ENCODE measurements at regions of chr5 and their contacts with region 1.

Region 1: DNA sequence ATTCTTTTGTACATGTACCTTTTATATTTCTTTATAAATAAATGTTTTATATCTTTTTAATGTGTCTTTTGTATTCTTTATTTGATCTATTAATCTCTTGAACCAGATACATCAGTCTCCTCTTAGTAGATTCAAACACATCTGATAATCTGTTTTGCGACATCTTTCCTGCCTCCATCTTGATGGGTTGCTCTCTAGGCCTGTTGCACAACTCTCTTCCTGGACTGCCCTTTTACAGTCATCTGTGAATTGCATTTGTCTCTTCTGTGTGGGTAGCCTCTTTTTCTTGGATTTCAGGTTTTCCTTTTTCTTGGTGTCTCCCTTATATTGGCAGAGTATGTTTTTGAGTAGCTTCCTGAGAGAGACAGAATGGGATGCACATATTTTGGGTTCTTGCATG is 6.2 kb downstream of the ZFYVE16 start:
- DNase-seq: no peak
- ATAC-seq: no peak
- H3K4me3 ChIP-seq: no peak overlapping the region
- H3K4me3 Mint-ChIP-seq: no peak overlapping the region
- H3K27ac ChIP-seq: no peak overlapping the region
- H3K27ac Mint-ChIP-seq: no peak overlapping the region
- H3K4me1 ChIP-seq: peaks cover 0 to under 1% of the 10 kb centered on the region in 2 experiments
- H3K4me1 Mint-ChIP-seq: peaks cover 16 to 39% (median 23%) of the 10 kb centered on the region in 3 donors
- H3K27me3 ChIP-seq: no peaks in the 10 kb centered on the region
- H3K27me3 Mint-ChIP-seq: no peaks in the 10 kb centered on the region

Region 2: GRCh38 chr5:80399526-80400239 is 14.4 kb before region 1 on chr5:
- CTCF ChIA-PET with region 1: no interaction called
- POLR2A ChIA-PET with region 1: interaction called in 1 of 2 experiments, 12 read pairs
- DNase-seq: peak in 2 of 35 experiments; percentile 6 to 8
- ATAC-seq: no peak
- H3K4me3 ChIP-seq: no peak overlapping the region
- H3K4me3 Mint-ChIP-seq: no peak overlapping the region
- H3K27ac ChIP-seq: no peak overlapping the region
- H3K27ac Mint-ChIP-seq: no peak overlapping the region
- H3K4me1 ChIP-seq: no peaks in the 10 kb centered on the region
- H3K4me1 Mint-ChIP-seq: no peaks in the 10 kb centered on the region
- H3K27me3 ChIP-seq: peaks cover 0 to 14% of the 10 kb centered on the region in 2 experiments
- H3K27me3 Mint-ChIP-seq: peaks cover 9 to 11% of the 10 kb centered on the region in 2 donors

Region 3: GRCh38 chr5:80466669-80467485 is 52.8 kb after region 1 on chr5:
- CTCF ChIA-PET with region 1: no interaction called
- POLR2A ChIA-PET with region 1: no interaction called
- DNase-seq: no peak
- ATAC-seq: no peak
- H3K4me3 ChIP-seq: no peak overlapping the region
- H3K4me3 Mint-ChIP-seq: no peak overlapping the region
- H3K27ac ChIP-seq: no peak overlapping the region
- H3K27ac Mint-ChIP-seq: no peak overlapping the region
- H3K4me1 ChIP-seq: no peaks in the 10 kb centered on the region
- H3K4me1 Mint-ChIP-seq: no peaks in the 10 kb centered on the region
- H3K27me3 ChIP-seq: no peaks in the 10 kb centered on the region
- H3K27me3 Mint-ChIP-seq: no peaks in the 10 kb centered on the region

Measured in T-cell (primary cell).